Activated CD4-positive, alpha-beta memory T cell treated with anti-CD3 and anti-CD28 coated beads for 36 hours (primary cell): ENCODE measurements at regions of chr10 and their contacts with region 1.

Region 1: GRCh38 chr10:96061232-96061631 is 17.8 kb downstream of the CCNJ start:
- DNase-seq: no peak
- H3K4me3 Mint-ChIP-seq: no peak overlapping the region
- H3K27ac Mint-ChIP-seq: no peak overlapping the region
- H3K4me1 Mint-ChIP-seq: peaks cover 16% of the 10 kb centered on the region
- H3K27me3 Mint-ChIP-seq: no peaks in the 10 kb centered on the region

Region 2: GRCh38 chr10:95976362-95977229 is 84.6 kb before region 1 on chr10:
- CTCF ChIA-PET with region 1: no interaction called
- POLR2A ChIA-PET with region 1: no interaction called
- intact Hi-C with region 1: no loop called
- DNase-seq: no peak
- H3K4me3 Mint-ChIP-seq: no peak overlapping the region
- H3K27ac Mint-ChIP-seq: no peak overlapping the region
- H3K4me1 Mint-ChIP-seq: no peaks in the 10 kb centered on the region
- H3K27me3 Mint-ChIP-seq: no peaks in the 10 kb centered on the region

Region 3: GRCh38 chr10:96025566-96025965 is 35.7 kb before region 1 on chr10:
- CTCF ChIA-PET with region 1: no interaction called
- POLR2A ChIA-PET with region 1: no interaction called
- intact Hi-C with region 1: no loop called
- DNase-seq: no peak
- H3K4me3 Mint-ChIP-seq: no peak overlapping the region
- H3K27ac Mint-ChIP-seq: no peak overlapping the region
- H3K4me1 Mint-ChIP-seq: no peaks in the 10 kb centered on the region
- H3K27me3 Mint-ChIP-seq: peaks cover 3% of the 10 kb centered on the region

Region 4: DNA sequence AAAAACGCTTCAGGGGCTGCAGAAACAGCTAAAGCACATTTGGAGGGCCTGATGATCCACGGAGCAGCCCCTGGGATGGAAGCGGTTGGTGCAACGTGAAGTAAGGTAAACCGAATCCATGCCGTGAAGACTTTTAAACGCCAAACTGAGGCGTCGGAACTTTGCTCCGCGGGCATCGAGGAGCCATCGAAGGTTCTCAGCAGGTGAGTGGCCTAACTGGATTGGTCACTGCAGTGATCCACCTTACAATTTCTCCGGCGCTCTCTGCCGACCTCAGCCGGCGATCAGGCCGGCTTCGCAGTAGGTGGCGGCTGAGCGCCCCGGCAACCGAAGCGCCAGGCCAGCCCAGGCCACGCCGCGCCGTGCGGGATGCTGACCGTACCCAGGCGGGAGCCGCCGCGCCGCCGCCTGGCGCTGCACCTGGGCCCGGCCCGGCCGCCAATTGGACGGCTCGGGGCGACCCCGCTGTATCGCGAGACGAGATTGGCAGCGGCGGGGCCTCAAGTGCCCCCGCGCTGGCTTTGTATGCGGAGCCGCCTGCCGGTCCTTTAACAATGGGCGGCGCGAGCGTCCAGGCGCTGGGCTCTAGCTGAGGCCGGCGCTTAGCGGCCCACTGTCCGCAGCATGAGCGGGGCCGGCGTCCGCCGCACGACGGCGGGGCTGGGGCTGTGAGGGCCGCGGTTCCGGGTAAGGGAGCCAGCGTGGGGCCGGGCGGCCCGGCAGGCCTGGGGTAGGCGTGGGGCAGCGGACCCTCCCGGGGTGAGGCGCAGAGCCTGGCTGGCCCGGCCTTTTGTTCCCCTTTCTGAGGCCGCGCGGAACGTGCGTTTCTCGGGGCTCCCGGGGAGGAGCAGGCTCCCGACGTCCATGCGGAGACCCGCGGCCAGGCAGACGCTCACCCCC is 17.9 kb before region 1 on chr10 and contains the start of gene CCNJ:
- CTCF ChIA-PET with region 1: no interaction called
- POLR2A ChIA-PET with region 1: no interaction called
- intact Hi-C with region 1: loop called (anchors 1 kb)
- DNase-seq: peak; percentile 88
- H3K4me3 Mint-ChIP-seq: peak within 1 kb of the TSS; percentile 90
- H3K27ac Mint-ChIP-seq: peak within 1 kb of the TSS; percentile 59
- H3K4me1 Mint-ChIP-seq: peaks cover 42% of the 10 kb centered on the region
- H3K27me3 Mint-ChIP-seq: peaks cover 5% of the 10 kb centered on the region
- total RNA-seq, gene CCNJ: 4.3 to 4.4 TPM

Region 5: GRCh38 chr10:96073722-96074121 is 12.5 kb after region 1 on chr10:
- CTCF ChIA-PET with region 1: no interaction called
- POLR2A ChIA-PET with region 1: interaction called, 3 read pairs
- intact Hi-C with region 1: loop called (anchors 1 kb)
- DNase-seq: no peak
- H3K4me3 Mint-ChIP-seq: no peak overlapping the region
- H3K27ac Mint-ChIP-seq: peak overlapping the region; percentile 1
- H3K4me1 Mint-ChIP-seq: peaks cover 20% of the 10 kb centered on the region
- H3K27me3 Mint-ChIP-seq: no peaks in the 10 kb centered on the region